HEK293 (cell line): ENCODE measurements at regions of chr18 and their contacts with region 1.

Region 1: DNA sequence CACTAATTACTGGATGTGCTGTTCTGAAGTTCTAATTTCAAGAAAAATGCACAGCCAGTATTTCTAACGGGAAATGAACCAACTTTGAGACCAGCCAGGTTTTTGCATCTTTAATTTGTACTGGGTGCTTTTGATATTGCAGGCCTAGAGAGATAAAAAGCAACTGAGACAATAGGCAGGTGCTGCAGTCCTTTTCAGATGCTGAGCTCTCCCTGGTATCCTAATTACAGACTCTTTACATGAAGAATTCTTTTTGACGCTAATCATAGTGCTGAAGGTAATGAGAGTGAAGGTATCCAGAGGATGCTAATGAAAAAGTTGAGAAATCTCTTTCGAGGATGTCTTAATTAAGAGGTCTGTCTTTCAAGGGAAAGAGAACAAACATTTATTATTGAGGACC is 85.1 kb downstream of the SERPINB8 start:
- H3K4me3 ChIP-seq: no peak overlapping the region
- H3K27ac ChIP-seq: no peak overlapping the region
- H3K4me1 ChIP-seq: no peaks in the 10 kb centered on the region
- CTCF ChIP-seq: no peak

Region 2: DNA sequence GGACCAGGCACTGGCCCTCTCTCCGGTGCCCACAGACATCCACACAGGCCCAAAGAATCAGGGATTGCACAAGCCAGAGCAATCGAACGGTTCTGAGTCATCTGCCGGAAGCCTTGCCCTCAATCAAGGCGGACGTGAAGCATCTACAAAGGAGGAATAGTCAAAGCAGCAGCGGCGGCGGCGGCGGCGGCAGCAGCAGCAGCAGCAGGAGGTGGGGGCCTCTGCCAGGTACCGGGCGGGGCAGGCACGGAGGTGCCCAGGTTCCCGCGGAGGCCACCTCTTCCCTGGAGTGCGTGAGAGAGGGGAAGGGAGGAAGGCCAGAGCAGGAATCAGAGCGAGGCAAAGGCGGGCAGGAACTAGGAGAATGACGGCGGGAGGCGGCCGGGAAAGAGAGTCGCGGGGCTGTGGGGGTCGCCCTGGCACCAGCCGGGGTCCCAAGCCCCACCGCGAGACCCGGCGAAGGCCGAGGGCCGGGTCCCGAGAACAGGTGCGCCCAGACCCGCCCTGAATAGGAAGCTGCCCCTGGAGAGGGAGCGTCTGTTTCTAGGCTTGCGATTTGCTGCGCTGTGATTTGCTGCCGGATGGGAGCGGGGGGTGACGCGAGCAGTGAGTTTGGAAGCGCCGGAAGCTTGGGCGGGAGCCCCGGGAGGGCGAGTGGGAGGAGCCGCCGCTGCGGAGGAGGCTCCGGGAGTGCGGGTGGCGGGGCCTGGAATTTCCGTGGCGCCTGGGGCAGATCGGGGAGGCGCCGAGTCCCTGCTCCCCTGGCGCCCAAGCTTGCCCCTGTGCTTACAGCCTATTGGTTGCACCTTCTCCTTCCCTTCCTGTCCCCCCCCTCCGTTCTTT is 84.8 kb before region 1 on chr18 and contains the start of gene SERPINB8:
- CTCF ChIA-PET with region 1: no interaction called
- POLR2A ChIA-PET with region 1: no interaction called
- H3K4me3 ChIP-seq: peak within 1 kb of the TSS; percentile 76
- H3K27ac ChIP-seq: peak within 1 kb of the TSS; percentile 94
- H3K4me1 ChIP-seq: peaks cover 9% of the 10 kb centered on the region; the same call in 1 of the 2 replicates
- CTCF ChIP-seq: no peak

Region 3: DNA sequence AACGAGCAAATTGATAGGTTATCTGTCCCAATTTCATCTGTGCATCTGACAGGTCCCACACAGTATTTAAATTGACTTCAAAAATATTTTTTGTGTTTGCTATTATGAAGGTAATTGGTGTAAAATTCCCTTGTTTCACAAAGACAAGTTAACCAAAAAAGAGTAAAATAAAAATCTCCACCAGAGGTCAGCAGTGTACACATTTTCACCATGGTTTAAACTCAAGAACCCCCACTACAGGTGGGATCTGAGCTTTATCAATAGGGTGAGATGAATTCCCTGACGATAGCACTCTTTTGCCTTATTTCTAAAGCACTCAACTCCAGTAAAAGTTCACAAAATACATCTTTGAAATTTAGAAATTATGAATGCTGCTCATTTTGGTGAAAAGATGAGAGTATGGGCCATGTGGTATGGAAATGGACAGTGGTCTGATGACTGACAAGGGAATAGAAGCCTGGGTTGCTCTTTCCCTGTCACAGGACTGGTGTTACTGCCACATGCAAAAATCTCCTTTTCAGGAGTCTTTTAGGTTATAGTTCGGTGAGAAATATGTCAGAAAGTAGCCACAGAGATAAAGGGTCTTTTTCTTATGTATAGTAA is 17.1 kb before region 1 on chr18:
- CTCF ChIA-PET with region 1: interaction called, 13 read pairs
- POLR2A ChIA-PET with region 1: no interaction called
- H3K4me3 ChIP-seq: no peak overlapping the region
- H3K27ac ChIP-seq: no peak overlapping the region
- H3K4me1 ChIP-seq: no peaks in the 10 kb centered on the region
- CTCF ChIP-seq: 0 out of 2 replicates have a peak, but pooled peaks have one; percentile 24